ENCODE measurements at regions of chr5 and their contacts with region 1.

Region 1: DNA sequence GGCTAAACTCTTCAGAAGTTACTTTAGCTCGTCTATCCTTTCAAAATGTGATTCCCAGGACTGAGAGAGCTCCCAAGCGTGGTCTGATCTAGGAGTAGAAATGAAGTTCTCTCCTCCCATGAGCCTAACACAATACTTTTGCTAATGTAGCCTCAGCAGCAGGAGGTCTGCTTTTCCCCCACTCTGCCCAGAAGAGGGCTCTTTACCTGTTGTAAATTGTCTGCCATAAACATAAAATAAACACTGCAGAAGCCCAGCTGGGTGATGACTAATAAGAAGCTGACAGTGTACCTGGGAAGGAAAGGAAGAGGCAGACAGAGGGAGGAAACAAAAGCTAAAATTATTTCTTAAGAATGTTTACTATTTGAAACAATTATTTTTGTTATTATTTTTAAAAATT is 15.4 kb downstream of the SLC36A3 start:
- DNase-seq: no peak
- H3K4me3 ChIP-seq: no peak overlapping the region
- H3K27ac ChIP-seq: no peak overlapping the region
- H3K4me1 ChIP-seq: peaks cover 0 to 6% (median 3%) of the 10 kb centered on the region in 4 experiments; a peak in 2 of 7 replicates
- H3K27me3 ChIP-seq: no peaks in the 10 kb centered on the region
- CTCF ChIP-seq: peak in 2 of 3 experiments; percentile 8 to 32; a peak in 2 of 4 replicates
- EP300 ChIP-seq: no peak
- POLR2A ChIP-seq: no peak
- RAD21 ChIP-seq: peak in 1 of 2 experiments; percentile 14; a peak in 1 of 4 replicates

Region 2: GRCh38 chr5:151037561-151038411 is 250.4 kb before region 1 on chr5:
- CTCF ChIA-PET with region 1: no interaction called
- POLR2A ChIA-PET with region 1: no interaction called
- DNase-seq: no peak
- H3K4me3 ChIP-seq: no peak overlapping the region
- H3K27ac ChIP-seq: no peak overlapping the region
- H3K4me1 ChIP-seq: no peaks in the 10 kb centered on the region
- H3K27me3 ChIP-seq: no peaks in the 10 kb centered on the region
- CTCF ChIP-seq: no peak
- EP300 ChIP-seq: no peak
- POLR2A ChIP-seq: no peak
- RAD21 ChIP-seq: no peak

Region 3: DNA sequence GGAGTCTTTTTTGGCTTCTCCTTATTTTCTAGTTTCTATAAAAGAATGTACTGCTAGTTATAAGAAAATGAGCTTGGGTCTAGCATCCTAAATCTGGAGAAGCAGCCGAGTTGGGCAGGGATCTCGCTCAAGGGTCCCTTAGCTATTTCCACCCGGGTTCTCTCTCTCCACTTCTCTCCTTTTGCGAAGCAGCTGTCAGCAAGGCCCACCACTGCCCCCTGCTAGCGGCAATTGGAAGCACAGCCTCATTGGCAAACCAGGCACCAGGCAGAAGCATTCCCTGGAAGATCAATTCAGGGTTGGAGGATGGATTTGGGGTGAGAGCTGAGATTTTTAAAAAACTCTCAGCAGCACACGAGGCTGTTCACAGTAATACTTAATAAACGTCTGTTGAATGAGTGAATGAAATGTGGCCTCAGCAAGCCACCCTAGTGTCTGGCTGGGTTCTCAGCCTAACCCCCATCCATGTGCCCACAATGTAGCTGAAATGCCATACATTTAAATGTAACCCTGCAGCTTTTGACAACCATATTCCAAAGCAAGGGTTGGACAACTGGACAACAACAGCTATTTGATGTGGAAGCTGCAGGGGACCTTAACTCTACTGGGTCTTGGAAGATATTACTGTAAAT is 172.8 kb before region 1 on chr5:
- CTCF ChIA-PET with region 1: no interaction called
- POLR2A ChIA-PET with region 1: no interaction called
- DNase-seq: peak; percentile 58 to 90
- H3K4me3 ChIP-seq: no peak overlapping the region
- H3K27ac ChIP-seq: no peak overlapping the region
- H3K4me1 ChIP-seq: no peaks in the 10 kb centered on the region
- H3K27me3 ChIP-seq: no peaks in the 10 kb centered on the region
- CTCF ChIP-seq: peak; percentile 88 to 94 (median 92)
- EP300 ChIP-seq: no peak
- POLR2A ChIP-seq: no peak
- RAD21 ChIP-seq: peak; percentile 91

Region 4: DNA sequence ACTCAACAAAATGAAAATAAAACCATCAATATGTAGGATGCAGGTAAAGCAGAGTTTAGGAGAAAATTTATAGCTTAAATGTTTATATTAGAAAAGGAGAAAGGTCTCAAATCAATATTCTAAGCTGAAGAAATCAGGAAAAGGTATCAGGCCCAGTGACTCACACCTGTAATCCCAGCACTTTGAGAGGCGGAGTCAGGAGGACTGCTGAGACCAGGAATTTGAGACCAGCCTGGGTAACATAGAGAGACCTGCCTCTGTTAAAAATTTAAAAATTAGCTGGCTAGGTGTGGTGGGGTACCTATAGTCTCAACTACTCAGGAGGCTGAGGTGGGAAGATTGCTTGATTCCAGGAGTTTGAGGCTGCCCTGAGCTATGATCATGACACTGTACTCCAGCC is 96.5 kb before region 1 on chr5:
- CTCF ChIA-PET with region 1: no interaction called
- POLR2A ChIA-PET with region 1: no interaction called
- DNase-seq: no peak
- H3K4me3 ChIP-seq: no peak overlapping the region
- H3K27ac ChIP-seq: no peak overlapping the region
- H3K4me1 ChIP-seq: no peaks in the 10 kb centered on the region; a peak in 2 of 7 replicates
- H3K27me3 ChIP-seq: no peaks in the 10 kb centered on the region
- CTCF ChIP-seq: no peak
- EP300 ChIP-seq: no peak
- POLR2A ChIP-seq: no peak
- RAD21 ChIP-seq: no peak

Region 5: DNA sequence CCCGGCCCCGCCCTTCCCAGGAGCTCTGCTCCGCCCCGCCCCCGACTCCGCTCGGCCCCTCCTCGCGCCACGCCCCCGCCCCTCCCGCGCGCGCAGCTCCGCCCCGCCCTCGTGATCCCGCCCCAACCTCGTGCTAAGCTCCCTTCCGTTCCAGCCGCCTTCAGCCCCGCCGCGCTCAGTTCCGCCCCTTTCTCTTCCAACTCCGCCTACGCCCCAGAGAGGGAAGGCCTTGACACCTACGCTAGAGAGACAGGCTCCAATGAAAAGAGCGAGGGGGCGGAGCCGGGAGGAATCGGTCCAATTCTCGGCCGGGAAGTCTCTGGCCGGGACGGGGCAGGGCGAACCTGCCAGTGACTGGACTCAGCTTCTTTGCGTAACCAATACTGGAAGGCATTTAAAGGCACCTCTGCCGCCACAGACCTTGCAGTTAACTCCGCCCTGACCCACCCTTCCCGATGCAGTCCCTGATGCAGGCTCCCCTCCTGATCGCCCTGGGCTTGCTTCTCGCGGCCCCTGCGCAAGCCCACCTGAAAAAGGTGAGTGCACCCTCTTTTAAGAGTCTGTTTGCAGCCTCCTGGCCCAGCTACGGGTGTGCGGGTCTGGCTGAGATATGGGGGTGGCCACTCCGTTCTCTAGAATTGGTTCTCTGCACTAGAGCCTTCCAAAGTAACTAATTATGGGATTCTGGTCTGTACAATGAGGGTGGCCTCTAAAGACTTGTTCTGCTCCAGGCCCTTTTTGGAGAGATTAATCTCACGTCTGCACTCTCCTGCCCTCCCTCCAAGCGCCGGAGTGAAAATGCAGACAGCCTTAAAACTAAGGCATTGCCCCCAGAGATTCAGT is 35.2 kb before region 1 on chr5 and contains the start of gene GM2A:
- CTCF ChIA-PET with region 1: interaction called, 25 read pairs
- POLR2A ChIA-PET with region 1: no interaction called
- DNase-seq: peak; percentile 97 to 98
- H3K4me3 ChIP-seq: peak within 1 kb of the TSS; percentile 72 to 84 (median 74)
- H3K27ac ChIP-seq: peak within 1 kb of the TSS; percentile 51; the same call in 1 of the 2 replicates
- H3K4me1 ChIP-seq: peaks cover 0 to 11% (median 4%) of the 10 kb centered on the region in 4 experiments
- H3K27me3 ChIP-seq: no peaks in the 10 kb centered on the region
- CTCF ChIP-seq: no peak
- EP300 ChIP-seq: no peak
- POLR2A ChIP-seq: peak in 1 of 2 experiments; percentile 92; a peak in 2 of 3 replicates
- RAD21 ChIP-seq: no peak; a peak in 1 of 4 replicates
- total RNA-seq, gene GM2A: 30.4 and 32.2 TPM in 2 replicates

Region 6: GRCh38 chr5:151264113-151264512 is 24.1 kb before region 1 on chr5:
- CTCF ChIA-PET with region 1: interaction called, 25 read pairs
- POLR2A ChIA-PET with region 1: no interaction called
- DNase-seq: no peak
- H3K4me3 ChIP-seq: no peak overlapping the region
- H3K27ac ChIP-seq: no peak overlapping the region
- H3K4me1 ChIP-seq: no peaks in the 10 kb centered on the region; a peak in 1 of 7 replicates
- H3K27me3 ChIP-seq: no peaks in the 10 kb centered on the region
- CTCF ChIP-seq: peak in 1 of 3 experiments; percentile 20; a peak in 1 of 4 replicates
- EP300 ChIP-seq: no peak
- POLR2A ChIP-seq: no peak
- RAD21 ChIP-seq: no peak

Region 7: GRCh38 chr5:151274670-151275069 is 13.5 kb before region 1 on chr5:
- CTCF ChIA-PET with region 1: interaction called, 12 read pairs
- POLR2A ChIA-PET with region 1: no interaction called
- DNase-seq: no peak
- H3K4me3 ChIP-seq: no peak overlapping the region
- H3K27ac ChIP-seq: no peak overlapping the region
- H3K4me1 ChIP-seq: no peaks in the 10 kb centered on the region
- H3K27me3 ChIP-seq: no peaks in the 10 kb centered on the region
- CTCF ChIP-seq: no peak
- EP300 ChIP-seq: no peak
- POLR2A ChIP-seq: no peak
- RAD21 ChIP-seq: no peak

Region 8: DNA sequence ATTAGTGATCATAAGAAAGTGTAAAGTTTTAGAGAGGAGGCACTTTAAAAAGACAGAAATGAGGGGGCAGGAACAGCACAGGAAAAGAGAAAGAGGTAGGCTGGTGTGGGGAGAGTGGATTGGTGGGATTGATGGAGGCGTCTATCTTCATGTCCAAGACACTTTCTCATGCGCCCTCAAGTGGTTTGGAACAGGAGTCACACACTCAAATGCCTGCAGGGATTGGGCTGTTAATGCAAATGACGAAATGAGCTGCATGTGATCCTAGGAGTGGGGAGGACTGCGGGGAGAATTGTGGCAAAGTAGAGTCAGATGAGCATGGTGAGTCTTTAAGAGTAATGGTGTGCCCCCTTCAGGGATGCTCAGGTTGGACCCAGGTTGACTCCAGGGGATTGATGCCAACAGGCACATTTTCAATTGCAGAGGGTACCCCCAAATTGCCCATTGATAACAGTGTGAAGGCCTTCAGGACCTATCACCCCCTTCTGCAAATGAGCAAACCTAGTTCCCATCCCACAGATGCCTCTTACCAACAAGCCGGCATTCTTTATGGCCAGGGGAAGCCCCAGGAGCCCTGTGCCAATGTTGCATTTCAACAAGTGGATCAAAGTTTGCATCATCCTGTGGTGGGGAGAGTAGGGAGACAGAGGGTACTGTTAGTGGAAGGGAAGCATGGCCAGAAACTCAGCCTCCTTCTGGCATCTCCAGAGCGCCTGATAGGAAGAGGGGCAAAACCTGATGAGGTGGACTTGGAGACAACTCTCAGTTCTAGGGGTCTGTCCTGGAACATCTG is 10.1 kb after region 1 on chr5:
- CTCF ChIA-PET with region 1: interaction called, 11 read pairs
- POLR2A ChIA-PET with region 1: no interaction called
- DNase-seq: no peak
- H3K4me3 ChIP-seq: no peak overlapping the region
- H3K27ac ChIP-seq: no peak overlapping the region
- H3K4me1 ChIP-seq: peaks cover 0 to 3% (median 0%) of the 10 kb centered on the region in 4 experiments; a peak in 2 of 7 replicates
- H3K27me3 ChIP-seq: no peaks in the 10 kb centered on the region
- CTCF ChIP-seq: peak; percentile 2 to 64 (median 48); a peak in 3 of 4 replicates
- EP300 ChIP-seq: no peak
- POLR2A ChIP-seq: no peak
- RAD21 ChIP-seq: peak; percentile 35 to 56; a peak in 3 of 4 replicates

Region 9: GRCh38 chr5:151315998-151316597 is 27.9 kb after region 1 on chr5:
- CTCF ChIA-PET with region 1: interaction called, 45 read pairs
- POLR2A ChIA-PET with region 1: no interaction called
- DNase-seq: peak in 1 of 2 experiments; percentile 85
- H3K4me3 ChIP-seq: no peak overlapping the region
- H3K27ac ChIP-seq: no peak overlapping the region
- H3K4me1 ChIP-seq: peaks cover 0 to 2% (median 0%) of the 10 kb centered on the region in 4 experiments; a peak in 2 of 7 replicates
- H3K27me3 ChIP-seq: no peaks in the 10 kb centered on the region
- CTCF ChIP-seq: peak; percentile 81 to 90 (median 89)
- EP300 ChIP-seq: no peak
- POLR2A ChIP-seq: no peak
- RAD21 ChIP-seq: peak; percentile 74 to 87

Region 10: GRCh38 chr5:151492729-151493128 is 204.5 kb after region 1 on chr5:
- CTCF ChIA-PET with region 1: no interaction called
- POLR2A ChIA-PET with region 1: no interaction called
- DNase-seq: no peak
- H3K4me3 ChIP-seq: no peak overlapping the region
- H3K27ac ChIP-seq: no peak overlapping the region
- H3K4me1 ChIP-seq: peaks cover 0 to 4% (median 0%) of the 10 kb centered on the region in 4 experiments; a peak in 2 of 7 replicates
- H3K27me3 ChIP-seq: no peaks in the 10 kb centered on the region
- CTCF ChIP-seq: no peak
- EP300 ChIP-seq: no peak
- POLR2A ChIP-seq: no peak
- RAD21 ChIP-seq: no peak